Breast epithelium (tissue), 4 donors: ENCODE measurements at regions of chr5 and their contacts with region 1.

Region 1: GRCh38 chr5:3325201-3325971 is 270.2 kb upstream of the IRX1 start:
- DNase-seq: no peak
- H3K4me3 ChIP-seq: peak overlapping the region in 1 of 3 donors; percentile 5
- H3K27ac ChIP-seq: peak overlapping the region in 1 of 2 donors; percentile 38
- H3K4me1 ChIP-seq: no peaks in the 10 kb centered on the region
- H3K27me3 ChIP-seq: no peaks in the 10 kb centered on the region
- CTCF ChIP-seq: no peak
- POLR2A ChIP-seq: no peak

Region 2: DNA sequence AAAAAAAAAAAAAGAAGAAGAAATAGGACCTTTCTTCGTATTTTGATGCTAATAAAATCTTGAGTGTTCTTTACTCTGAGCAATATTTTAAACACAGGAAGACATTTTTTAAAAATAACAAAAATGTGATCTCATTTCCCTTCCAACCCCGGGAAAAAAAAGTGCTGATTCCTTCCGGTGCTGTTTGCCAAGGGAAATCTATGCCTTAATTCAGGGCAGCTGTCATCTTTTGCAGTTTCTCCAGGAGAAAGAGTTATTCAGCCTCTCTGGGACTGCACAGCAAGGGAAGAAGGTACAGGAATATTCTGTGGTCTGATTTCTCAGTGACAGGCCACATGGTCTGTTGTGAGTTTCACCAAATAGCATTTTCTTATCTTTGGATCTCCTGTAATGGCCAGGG is 21.6 kb before region 1 on chr5:
- intact Hi-C with region 1: loop called (anchors 2 kb)
- DNase-seq: no peak
- H3K4me3 ChIP-seq: no peak overlapping the region
- H3K27ac ChIP-seq: no peak overlapping the region
- H3K4me1 ChIP-seq: no peaks in the 10 kb centered on the region
- H3K27me3 ChIP-seq: no peaks in the 10 kb centered on the region
- CTCF ChIP-seq: no peak
- POLR2A ChIP-seq: no peak

Region 3: DNA sequence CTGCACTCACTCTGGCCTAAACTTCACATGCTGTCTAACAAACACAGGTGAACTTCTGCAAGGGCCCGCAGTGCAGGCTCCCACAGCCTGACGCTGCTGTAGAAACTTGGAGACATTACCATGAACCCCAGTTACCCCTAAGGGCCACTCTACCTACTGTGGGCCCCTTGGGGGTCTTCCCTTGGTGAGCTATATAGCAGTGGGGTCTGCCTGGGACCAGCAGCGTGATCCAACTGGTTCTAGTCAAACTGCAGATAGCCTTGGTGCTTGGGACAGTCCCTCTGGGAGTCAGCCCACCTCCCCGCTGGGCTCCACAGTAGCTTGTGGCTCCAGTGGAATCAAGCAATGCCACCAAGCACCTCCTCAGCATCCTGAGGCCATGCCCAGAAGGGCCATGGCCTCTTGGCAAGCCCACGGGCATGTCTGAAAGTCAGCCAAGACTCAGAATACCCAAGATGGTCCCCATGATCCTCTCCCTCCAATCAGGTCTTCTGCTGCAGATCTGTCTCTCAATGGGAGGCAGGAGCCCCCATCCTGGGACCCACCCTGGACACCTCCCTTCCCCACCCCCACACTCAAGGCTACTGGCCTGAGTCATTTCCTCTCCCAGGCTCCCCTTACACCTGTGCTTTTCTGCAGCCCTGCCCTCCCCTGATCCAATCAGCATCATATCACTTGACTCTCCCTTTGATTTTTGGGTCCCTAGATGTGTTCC is 40.3 kb after region 1 on chr5:
- intact Hi-C with region 1: loop called (anchors 2 kb)
- DNase-seq: no peak
- H3K4me3 ChIP-seq: no peak overlapping the region
- H3K27ac ChIP-seq: no peak overlapping the region
- H3K4me1 ChIP-seq: no peaks in the 10 kb centered on the region
- H3K27me3 ChIP-seq: no peaks in the 10 kb centered on the region
- CTCF ChIP-seq: no peak
- POLR2A ChIP-seq: no peak